Common myeloid progenitor, CD34-positive (primary cell): ENCODE measurements at regions of chr5 and their contacts with region 1.

Region 1: DNA sequence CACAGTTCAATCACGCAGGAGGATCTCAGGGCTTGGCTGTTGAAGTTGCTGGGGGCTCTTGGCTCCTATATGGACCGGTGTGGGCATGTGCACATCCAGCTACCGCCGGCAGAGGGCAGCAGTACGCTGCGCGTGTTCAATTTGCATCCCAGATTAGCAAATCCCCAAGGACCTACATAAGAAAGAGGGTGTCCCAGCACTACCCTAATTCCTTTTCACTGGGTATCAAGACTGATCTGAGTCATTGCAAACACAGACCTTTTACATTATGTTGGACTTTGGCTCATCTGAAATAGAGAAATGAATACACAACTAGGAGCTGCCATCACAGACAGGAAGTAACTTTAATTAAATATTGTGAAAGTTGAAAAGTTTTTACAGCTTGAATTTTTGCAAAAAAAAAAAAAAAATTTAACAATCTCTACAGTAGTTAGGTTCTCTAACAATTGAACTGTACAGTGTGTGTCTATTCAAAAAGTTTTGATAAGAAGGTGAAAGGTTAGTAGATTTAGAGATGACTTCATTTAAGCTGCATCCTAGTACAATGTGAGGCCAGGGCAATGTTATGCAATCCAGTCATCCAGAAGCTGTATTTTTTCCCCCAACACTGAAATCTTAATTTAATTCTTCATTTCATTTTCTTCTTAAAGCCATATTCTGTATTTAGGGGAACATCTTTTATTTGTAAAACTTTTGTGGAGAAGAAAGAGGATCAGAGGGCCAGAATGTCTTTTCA is 404.0 kb downstream of the EBF1 start:
- DNase-seq: peak; percentile 59 to 63 (median 61)
- H3K4me3 ChIP-seq: no peak overlapping the region
- H3K27ac ChIP-seq: no peak overlapping the region
- H3K4me1 ChIP-seq: peaks cover 0 to 7% (median under 1%) of the 10 kb centered on the region in 4 experiments
- H3K27me3 ChIP-seq: peaks cover 0 to 3% (median 0%) of the 10 kb centered on the region in 5 experiments

Region 2: GRCh38 chr5:158174918-158175851 is 520.6 kb before region 1 on chr5:
- CTCF ChIA-PET with region 1: interaction called, 10 read pairs
- POLR2A ChIA-PET with region 1: no interaction called
- DNase-seq: peak; percentile 68 to 76 (median 72)
- H3K4me3 ChIP-seq: no peak overlapping the region
- H3K27ac ChIP-seq: no peak overlapping the region
- H3K4me1 ChIP-seq: no peaks in the 10 kb centered on the region
- H3K27me3 ChIP-seq: peaks cover 0 to 4% (median 3%) of the 10 kb centered on the region in 5 experiments

Region 3: GRCh38 chr5:158640593-158640980 is 55.2 kb before region 1 on chr5:
- CTCF ChIA-PET with region 1: no interaction called
- POLR2A ChIA-PET with region 1: no interaction called
- DNase-seq: no peak
- H3K4me3 ChIP-seq: no peak overlapping the region
- H3K27ac ChIP-seq: no peak overlapping the region
- H3K4me1 ChIP-seq: no peaks in the 10 kb centered on the region
- H3K27me3 ChIP-seq: no peaks in the 10 kb centered on the region

Region 4: DNA sequence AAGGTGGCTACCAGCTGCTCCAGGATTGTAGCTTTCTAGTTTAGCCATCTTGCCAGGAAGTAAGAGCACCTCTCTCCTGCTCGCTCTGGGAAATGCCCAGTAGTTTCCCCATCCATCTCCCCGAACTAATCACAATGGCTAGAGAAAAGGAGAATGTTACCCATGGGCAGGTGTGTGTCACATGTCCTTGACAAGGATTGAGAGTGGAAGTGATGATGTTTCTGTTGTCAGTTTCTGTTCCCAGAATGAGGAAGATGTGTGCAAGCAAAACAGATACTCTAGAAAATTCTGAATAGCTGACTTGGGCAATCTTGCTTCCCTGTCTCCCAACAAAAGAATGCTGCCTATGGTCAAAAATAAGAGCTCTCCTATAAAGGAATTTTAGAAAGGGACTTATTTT is 25.6 kb before region 1 on chr5:
- CTCF ChIA-PET with region 1: no interaction called
- POLR2A ChIA-PET with region 1: no interaction called
- DNase-seq: no peak
- H3K4me3 ChIP-seq: no peak overlapping the region
- H3K27ac ChIP-seq: no peak overlapping the region
- H3K4me1 ChIP-seq: no peaks in the 10 kb centered on the region
- H3K27me3 ChIP-seq: no peaks in the 10 kb centered on the region

Region 5: GRCh38 chr5:159100782-159101646 is 405.3 kb after region 1 on chr5:
- CTCF ChIA-PET with region 1: interaction called, 113 read pairs
- POLR2A ChIA-PET with region 1: interaction called, 5 read pairs
- DNase-seq: no peak
- H3K4me3 ChIP-seq: peak overlapping the region; percentile 13 to 70 (median 57)
- H3K27ac ChIP-seq: no peak overlapping the region
- H3K4me1 ChIP-seq: peaks cover 3 to 48% (median 40%) of the 10 kb centered on the region in 4 experiments
- H3K27me3 ChIP-seq: peaks cover 9 to 99% (median 66%) of the 10 kb centered on the region in 5 experiments

Region 6: GRCh38 chr5:159106569-159107282 is 411.0 kb after region 1 on chr5:
- CTCF ChIA-PET with region 1: interaction called, 113 read pairs
- POLR2A ChIA-PET with region 1: interaction called, 5 read pairs
- DNase-seq: peak; percentile 72 to 80 (median 80)
- H3K4me3 ChIP-seq: peak overlapping the region in 6 of 7 experiments; percentile 35 to 64 (median 47)
- H3K27ac ChIP-seq: no peak overlapping the region
- H3K4me1 ChIP-seq: peaks cover 0 to 27% (median 22%) of the 10 kb centered on the region in 4 experiments
- H3K27me3 ChIP-seq: peaks cover 14 to 89% (median 61%) of the 10 kb centered on the region in 5 experiments

Region 7: DNA sequence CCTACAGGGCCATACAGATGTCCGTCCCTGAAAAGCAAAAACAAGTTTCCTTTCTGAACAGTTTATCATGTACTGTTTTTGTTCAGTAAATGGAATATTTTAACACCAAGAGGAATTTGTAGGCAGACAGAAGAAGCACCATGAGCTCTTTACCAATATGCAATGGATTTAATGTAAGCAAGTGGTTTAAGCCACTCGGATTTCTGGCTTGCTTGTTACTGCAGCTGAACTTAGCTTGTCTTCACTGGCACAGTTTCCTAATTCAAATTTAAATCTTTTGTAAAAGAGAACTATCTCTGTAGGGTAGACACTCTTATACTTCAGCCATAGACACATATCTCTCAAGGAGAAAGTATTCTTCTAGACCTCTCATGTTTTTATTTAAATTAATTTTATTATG is 416.7 kb after region 1 on chr5:
- CTCF ChIA-PET with region 1: interaction called, 113 read pairs
- POLR2A ChIA-PET with region 1: interaction called, 5 read pairs
- DNase-seq: no peak
- H3K4me3 ChIP-seq: no peak overlapping the region
- H3K27ac ChIP-seq: no peak overlapping the region
- H3K4me1 ChIP-seq: no peaks in the 10 kb centered on the region
- H3K27me3 ChIP-seq: peaks cover 2 to 46% (median 26%) of the 10 kb centered on the region in 5 experiments